Activated CD4-positive, alpha-beta T cell treated with anti-CD3 and anti-CD28 coated beads for 36 hours (primary cell): ENCODE measurements at regions of chr4 and their contacts with region 1.

Region 1: DNA sequence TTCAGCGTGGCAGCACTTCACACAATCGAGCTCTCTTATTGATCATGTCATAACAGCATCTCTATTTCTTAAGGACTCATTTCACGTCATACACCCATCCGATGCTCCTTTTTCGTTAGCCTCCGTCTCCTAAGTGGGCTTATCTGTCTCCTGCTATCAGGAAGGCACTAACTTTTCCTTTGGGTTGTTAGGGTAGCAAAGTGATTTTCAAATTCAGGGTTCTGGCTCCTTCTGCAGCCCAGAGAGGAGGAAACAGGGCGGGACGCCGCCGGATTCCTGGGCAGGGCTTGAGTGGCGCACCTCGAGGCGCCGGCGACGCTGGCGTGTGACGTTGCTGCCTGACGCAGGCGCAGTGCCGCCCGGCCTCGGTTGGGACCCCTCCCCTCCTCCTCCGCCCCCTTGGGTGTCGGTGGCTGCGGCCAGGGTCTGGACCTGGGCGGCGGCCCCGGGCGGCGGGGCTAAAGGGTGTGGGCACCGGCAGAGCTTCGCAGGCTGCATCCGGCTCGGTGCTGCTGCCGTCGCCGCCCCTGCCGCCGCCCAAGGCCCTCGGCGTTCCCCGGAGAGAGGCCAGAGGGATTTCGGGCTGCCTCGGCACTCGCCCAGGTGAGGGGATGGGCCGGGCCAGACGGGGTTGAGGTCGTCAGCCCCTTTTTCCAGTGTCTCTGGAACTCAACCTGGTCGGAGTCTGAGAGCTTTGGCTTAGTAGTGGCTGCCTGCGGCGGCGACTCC is at the start of gene BLTP1:
- DNase-seq: peak; percentile 93
- ATAC-seq: peak; percentile 91
- H3K4me3 Mint-ChIP-seq: peak within 1 kb of the TSS; percentile 85
- H3K27ac Mint-ChIP-seq: peak within 1 kb of the TSS; percentile 98
- H3K4me1 Mint-ChIP-seq: peaks cover 50% of the 10 kb centered on the region
- H3K27me3 Mint-ChIP-seq: no peaks in the 10 kb centered on the region
- total RNA-seq, gene BLTP1: 16.5 to 20.1 TPM

Region 2: GRCh38 chr4:121400632-121401031 is 751.5 kb before region 1 on chr4:
- CTCF ChIA-PET with region 1: no interaction called
- POLR2A ChIA-PET with region 1: no interaction called
- intact Hi-C with region 1: no loop called
- DNase-seq: no peak
- ATAC-seq: no peak
- H3K4me3 Mint-ChIP-seq: no peak overlapping the region
- H3K27ac Mint-ChIP-seq: no peak overlapping the region
- H3K4me1 Mint-ChIP-seq: no peaks in the 10 kb centered on the region
- H3K27me3 Mint-ChIP-seq: peaks cover 2% of the 10 kb centered on the region

Region 3: DNA sequence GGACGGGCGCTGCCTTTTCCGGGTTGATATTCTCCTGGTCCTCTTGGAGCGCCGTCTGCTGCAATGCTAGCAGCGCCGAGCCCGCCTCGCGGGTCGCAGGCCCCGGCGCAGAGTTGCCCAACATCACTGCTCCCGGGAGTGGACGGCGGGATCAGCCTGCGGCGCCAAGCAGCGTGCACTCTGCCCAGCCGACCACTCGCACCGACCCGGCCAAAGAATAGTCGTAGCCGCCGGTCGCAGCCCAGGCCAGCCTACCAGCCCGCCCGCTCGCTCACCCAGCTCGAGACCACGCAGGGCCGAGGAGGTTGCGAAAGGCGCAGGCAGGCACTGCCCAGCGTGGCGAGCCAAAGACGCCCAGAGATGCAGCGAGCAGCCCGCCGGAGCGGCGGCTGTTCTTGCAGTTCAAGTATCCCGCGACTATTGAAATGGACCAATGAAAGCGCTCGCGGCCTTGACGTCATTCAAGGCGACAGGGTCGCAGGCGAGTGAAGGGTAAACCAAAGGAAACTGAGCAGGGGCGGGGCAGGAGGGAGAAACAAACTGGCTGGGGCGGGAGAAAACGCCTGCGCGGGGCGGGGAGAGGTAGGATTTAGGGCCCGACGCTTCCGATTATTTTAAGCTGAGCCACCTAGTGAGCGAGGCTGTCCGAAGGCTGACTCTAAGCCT is 328.5 kb before region 1 on chr4 and contains the start of gene CCNA2:
- CTCF ChIA-PET with region 1: no interaction called
- POLR2A ChIA-PET with region 1: no interaction called
- intact Hi-C with region 1: loop called (anchors 2 to 5 kb)
- DNase-seq: peak; percentile 98
- ATAC-seq: peak; percentile 97
- H3K4me3 Mint-ChIP-seq: peak within 1 kb of the TSS; percentile 97
- H3K27ac Mint-ChIP-seq: peak within 1 kb of the TSS; percentile 88
- H3K4me1 Mint-ChIP-seq: peaks cover 16% of the 10 kb centered on the region
- H3K27me3 Mint-ChIP-seq: no peaks in the 10 kb centered on the region
- total RNA-seq, gene CCNA2: 113 to 118 TPM

Region 4: DNA sequence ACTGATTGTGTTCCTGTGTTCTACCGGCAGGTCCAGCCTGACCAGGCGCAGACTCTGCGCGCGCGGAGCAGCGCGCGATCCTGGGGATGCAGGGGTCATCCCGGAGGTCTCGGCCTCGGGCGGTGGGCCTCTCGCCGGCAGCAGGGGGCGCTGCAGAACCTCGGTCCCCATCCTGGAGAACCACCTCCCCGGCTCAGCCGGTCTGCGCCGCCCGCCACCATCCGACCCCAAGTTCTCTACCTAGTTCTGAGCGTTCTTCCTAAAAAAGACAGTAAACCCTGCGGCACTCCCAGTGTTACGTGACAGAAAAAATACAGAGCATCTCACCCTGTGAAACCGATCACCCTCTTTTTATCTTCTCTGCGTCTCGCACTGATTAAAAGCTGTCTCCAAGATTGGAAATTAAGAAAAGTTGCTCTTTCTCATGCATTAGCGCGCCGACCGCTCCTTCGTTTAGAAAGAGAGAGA is 201.9 kb before region 1 on chr4:
- CTCF ChIA-PET with region 1: no interaction called
- POLR2A ChIA-PET with region 1: no interaction called
- intact Hi-C with region 1: loop called (anchors 2 to 5 kb)
- DNase-seq: peak; percentile 94
- ATAC-seq: peak; percentile 87
- H3K4me3 Mint-ChIP-seq: peak overlapping the region; percentile 77
- H3K27ac Mint-ChIP-seq: no peak overlapping the region
- H3K4me1 Mint-ChIP-seq: peaks cover 4% of the 10 kb centered on the region
- H3K27me3 Mint-ChIP-seq: peaks cover 44% of the 10 kb centered on the region

Region 5: DNA sequence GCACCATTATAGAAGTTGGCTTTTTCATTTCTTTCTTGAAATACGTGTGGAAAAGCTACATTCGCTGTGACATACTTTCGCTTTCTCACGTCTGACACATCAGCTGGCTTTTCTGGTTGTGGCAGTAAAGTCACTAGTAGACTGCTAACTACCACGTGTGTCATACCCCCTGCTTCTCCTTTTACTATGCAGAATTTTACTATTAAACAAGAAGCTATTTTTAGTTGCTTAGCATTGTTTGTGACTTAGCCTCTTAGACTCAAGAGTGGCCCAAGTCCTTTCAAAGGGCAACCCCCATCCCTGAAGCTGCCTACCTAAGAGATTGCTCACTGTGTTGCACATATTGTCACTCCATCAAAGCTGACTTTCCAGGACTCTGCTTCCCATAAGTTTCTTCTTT is 306.5 kb after region 1 on chr4:
- CTCF ChIA-PET with region 1: no interaction called
- POLR2A ChIA-PET with region 1: no interaction called
- intact Hi-C with region 1: loop called in 1 of 2 experiments (anchors 2 kb)
- DNase-seq: peak; percentile 74
- ATAC-seq: peak; percentile 86
- H3K4me3 Mint-ChIP-seq: peak overlapping the region; percentile 62
- H3K27ac Mint-ChIP-seq: peak overlapping the region; percentile 89
- H3K4me1 Mint-ChIP-seq: peaks cover 51% of the 10 kb centered on the region
- H3K27me3 Mint-ChIP-seq: no peaks in the 10 kb centered on the region

Region 6: DNA sequence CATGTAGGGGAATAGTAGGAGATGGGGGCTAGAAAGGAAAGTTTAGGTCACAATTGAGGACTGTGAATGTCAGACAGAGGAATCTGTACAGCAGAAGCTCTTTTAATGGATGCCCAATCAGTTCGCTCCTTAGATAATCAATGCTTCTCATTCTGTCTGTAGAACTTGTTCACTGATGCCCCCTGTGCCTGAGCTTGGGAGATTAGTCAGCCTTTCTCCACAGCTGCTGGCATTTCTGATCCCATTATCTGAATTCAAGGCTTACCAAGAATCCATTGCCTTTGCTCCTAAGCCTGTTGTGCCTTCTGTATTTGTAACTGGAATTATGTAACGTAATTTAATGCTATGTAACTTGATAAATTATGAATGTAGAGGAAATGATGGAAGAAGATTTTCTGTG is 527.2 kb after region 1 on chr4:
- CTCF ChIA-PET with region 1: no interaction called
- POLR2A ChIA-PET with region 1: no interaction called
- intact Hi-C with region 1: no loop called
- DNase-seq: no peak
- ATAC-seq: no peak
- H3K4me3 Mint-ChIP-seq: no peak overlapping the region
- H3K27ac Mint-ChIP-seq: no peak overlapping the region
- H3K4me1 Mint-ChIP-seq: peaks cover 8% of the 10 kb centered on the region
- H3K27me3 Mint-ChIP-seq: peaks cover 15% of the 10 kb centered on the region